CD4-positive, alpha-beta T cell (primary cell): ENCODE measurements at regions of chr9 and their contacts with region 1.

Region 1: DNA sequence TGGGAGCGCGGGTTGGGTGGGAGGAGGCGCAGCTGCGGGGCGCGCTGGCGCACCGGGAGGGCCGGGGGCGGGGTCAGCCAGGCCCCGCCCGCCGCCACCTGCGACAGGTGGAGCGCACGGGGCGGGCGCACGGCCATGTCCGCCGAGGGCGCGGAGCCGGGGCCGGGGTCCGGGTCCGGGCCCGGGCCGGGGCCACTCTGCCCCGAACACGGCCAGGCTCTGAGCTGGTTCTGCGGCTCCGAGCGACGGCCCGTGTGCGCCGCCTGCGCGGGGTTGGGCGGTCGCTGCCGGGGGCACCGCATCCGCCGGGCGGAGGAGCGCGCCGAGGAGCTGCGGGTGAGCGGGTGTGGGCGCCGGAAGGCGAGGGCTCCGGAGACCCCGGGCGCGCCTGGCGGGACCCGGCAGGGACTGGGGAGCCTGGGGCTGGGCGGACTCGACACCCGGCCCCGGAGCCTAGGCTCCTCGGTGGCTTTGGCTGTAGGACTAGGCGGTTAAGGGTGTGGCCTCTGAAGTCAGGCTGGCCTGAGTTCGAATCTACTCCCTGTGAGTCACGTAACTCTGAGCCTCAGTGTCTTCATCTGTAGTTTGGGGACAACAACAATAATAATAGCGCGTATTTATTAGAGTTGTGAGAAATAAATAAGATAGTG is at the start of gene BSPRY:
- DNase-seq: peak in 7 of 14 experiments; percentile 11 to 55 (median 34)
- ATAC-seq: peak; percentile 81
- H3K4me3 ChIP-seq: peak within 1 kb of the TSS; percentile 47
- H3K4me3 Mint-ChIP-seq: peak within 1 kb of the TSS; percentile 81
- H3K27ac ChIP-seq: no peak within 1 kb of the TSS
- H3K27ac Mint-ChIP-seq: no peak within 1 kb of the TSS
- H3K4me1 ChIP-seq: peaks cover 20% of the 10 kb centered on the region
- H3K4me1 Mint-ChIP-seq: peaks cover 13% of the 10 kb centered on the region
- H3K27me3 ChIP-seq: peaks cover 8 to 15% of the 10 kb centered on the region in 2 experiments
- H3K27me3 Mint-ChIP-seq: peaks cover 53% of the 10 kb centered on the region
- CTCF ChIP-seq: no peak
- total RNA-seq, gene BSPRY: not detected

Region 2: DNA sequence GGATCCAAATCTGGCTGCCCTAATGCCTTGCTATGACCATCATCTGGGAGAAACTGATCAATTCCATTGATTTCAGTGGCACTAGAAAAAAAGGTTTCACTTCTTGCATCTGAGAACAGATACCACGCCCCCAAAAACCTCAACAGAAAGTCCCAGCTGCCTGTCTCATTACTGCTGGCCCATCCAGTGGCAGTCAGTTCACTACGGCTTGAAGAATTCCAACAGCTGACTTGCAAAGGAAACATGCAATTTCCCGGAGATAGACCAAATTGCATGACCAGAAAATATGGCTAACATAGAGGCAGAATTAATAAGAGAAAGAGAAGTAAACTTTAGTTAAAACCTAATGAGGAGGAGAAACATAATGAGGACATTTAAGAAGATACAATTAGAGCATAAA is 1404.4 kb before region 1 on chr9:
- CTCF ChIA-PET with region 1: no interaction called
- POLR2A ChIA-PET with region 1: no interaction called
- intact Hi-C with region 1: no loop called
- DNase-seq: peak in 3 of 14 experiments; percentile 13 to 54 (median 48)
- ATAC-seq: peak; percentile 37
- H3K4me3 ChIP-seq: no peak overlapping the region
- H3K4me3 Mint-ChIP-seq: no peak overlapping the region
- H3K27ac ChIP-seq: no peak overlapping the region
- H3K27ac Mint-ChIP-seq: no peak overlapping the region
- H3K4me1 ChIP-seq: peaks cover 7% of the 10 kb centered on the region
- H3K4me1 Mint-ChIP-seq: peaks cover 12% of the 10 kb centered on the region
- H3K27me3 ChIP-seq: no peaks in the 10 kb centered on the region
- H3K27me3 Mint-ChIP-seq: no peaks in the 10 kb centered on the region
- CTCF ChIP-seq: no peak

Region 3: DNA sequence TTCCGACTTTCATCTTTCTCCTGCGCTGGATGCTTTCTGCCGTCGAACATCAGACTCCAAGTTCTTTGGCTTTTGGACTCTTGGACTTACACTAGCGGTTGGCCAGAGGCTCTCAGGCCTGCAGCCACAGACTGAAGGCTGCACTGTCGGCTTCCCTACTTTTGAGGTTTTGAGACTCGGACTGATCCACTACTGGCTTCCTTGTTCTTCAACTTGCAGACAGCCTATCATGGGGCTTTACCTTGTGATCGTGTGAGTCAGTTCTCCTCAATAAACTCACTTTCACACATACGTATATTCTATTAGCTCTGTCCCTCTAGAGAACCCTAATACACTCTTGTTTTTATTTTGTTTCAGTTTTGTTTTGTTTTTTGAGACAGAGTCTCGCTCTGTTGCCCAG is 138.8 kb before region 1 on chr9:
- CTCF ChIA-PET with region 1: no interaction called
- POLR2A ChIA-PET with region 1: no interaction called
- intact Hi-C with region 1: no loop called
- DNase-seq: no peak
- ATAC-seq: no peak
- H3K4me3 ChIP-seq: no peak overlapping the region
- H3K4me3 Mint-ChIP-seq: no peak overlapping the region
- H3K27ac ChIP-seq: no peak overlapping the region
- H3K27ac Mint-ChIP-seq: no peak overlapping the region
- H3K4me1 ChIP-seq: no peaks in the 10 kb centered on the region
- H3K4me1 Mint-ChIP-seq: peaks cover 15% of the 10 kb centered on the region
- H3K27me3 ChIP-seq: no peaks in the 10 kb centered on the region
- H3K27me3 Mint-ChIP-seq: no peaks in the 10 kb centered on the region
- CTCF ChIP-seq: no peak

Region 4: DNA sequence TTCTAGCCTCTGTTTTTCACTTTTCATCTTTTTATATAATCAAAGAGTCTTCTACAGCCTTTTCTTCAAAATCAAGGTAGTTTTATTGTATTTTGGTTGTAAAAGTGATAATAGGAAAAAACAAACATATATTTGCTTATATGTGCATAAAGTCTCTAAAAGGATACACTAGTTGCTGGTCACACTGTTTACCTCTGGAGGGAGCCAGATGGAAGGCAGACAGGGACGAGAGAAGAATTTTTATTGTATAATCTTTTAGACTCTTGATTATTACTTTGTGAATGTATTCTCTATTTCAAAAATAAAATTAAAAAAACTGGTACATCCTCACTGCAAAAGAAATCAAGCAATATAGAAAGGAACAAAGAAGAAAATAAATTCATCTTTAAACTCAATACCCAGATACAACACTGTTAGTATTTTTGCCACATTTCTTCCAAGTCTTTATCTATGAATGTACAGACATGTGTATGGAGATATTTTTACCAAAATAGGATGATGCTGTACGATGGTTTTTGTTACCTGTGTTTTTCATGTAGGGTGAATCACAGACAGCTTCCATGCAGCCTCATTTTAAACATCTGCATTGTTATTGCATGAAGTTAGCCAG is 40.3 kb before region 1 on chr9:
- CTCF ChIA-PET with region 1: no interaction called
- POLR2A ChIA-PET with region 1: no interaction called
- intact Hi-C with region 1: loop called in 1 of 2 experiments (anchors 1 kb)
- DNase-seq: peak in 7 of 14 experiments; percentile 1 to 56 (median 24)
- ATAC-seq: peak; percentile 46
- H3K4me3 ChIP-seq: no peak overlapping the region
- H3K4me3 Mint-ChIP-seq: no peak overlapping the region
- H3K27ac ChIP-seq: no peak overlapping the region
- H3K27ac Mint-ChIP-seq: no peak overlapping the region
- H3K4me1 ChIP-seq: no peaks in the 10 kb centered on the region
- H3K4me1 Mint-ChIP-seq: no peaks in the 10 kb centered on the region
- H3K27me3 ChIP-seq: no peaks in the 10 kb centered on the region
- H3K27me3 Mint-ChIP-seq: no peaks in the 10 kb centered on the region
- CTCF ChIP-seq: peak; percentile 56